Gastrocnemius medialis (tissue), 4 donors: ENCODE measurements at regions of chr3 and their contacts with region 1.

Region 1: GRCh38 chr3:134381827-134382442 is 7.7 kb upstream of the AMOTL2 start:
- DNase-seq: no peak
- ATAC-seq: no peak
- H3K4me3 ChIP-seq: no peak overlapping the region
- H3K27ac ChIP-seq: no peak overlapping the region
- H3K4me1 ChIP-seq: peaks cover 0 to 11% of the 10 kb centered on the region in 2 donors
- H3K27me3 ChIP-seq: no peaks in the 10 kb centered on the region
- CTCF ChIP-seq: no peak
- POLR2A ChIP-seq: no peak

Region 2: GRCh38 chr3:134464064-134464697 is 82.2 kb after region 1 on chr3:
- in situ Hi-C with region 1: loop called in 1 of 4 experiments (anchors 5 kb)
- intact Hi-C with region 1: no loop called
- DNase-seq: peak; percentile 20 to 70
- ATAC-seq: peak; percentile 47 to 66
- H3K4me3 ChIP-seq: no peak overlapping the region
- H3K27ac ChIP-seq: peak overlapping the region; percentile 17 to 66 (median 62)
- H3K4me1 ChIP-seq: peaks cover 4 to 6% of the 10 kb centered on the region in 2 donors
- H3K27me3 ChIP-seq: no peaks in the 10 kb centered on the region
- CTCF ChIP-seq: no peak
- POLR2A ChIP-seq: no peak